ENCODE measurements at regions of chr2 and their contacts with region 1.

Region 1: GRCh38 chr2:215347878-215348277 is 36.0 kb downstream of the ATIC start:
- DNase-seq: no peak
- H3K4me3 ChIP-seq: no peak overlapping the region
- H3K4me3 Mint-ChIP-seq: no peak overlapping the region
- H3K27ac Mint-ChIP-seq: no peak overlapping the region
- H3K4me1 ChIP-seq: no peaks in the 10 kb centered on the region
- H3K4me1 Mint-ChIP-seq: no peaks in the 10 kb centered on the region
- H3K27me3 ChIP-seq: no peaks in the 10 kb centered on the region
- H3K27me3 Mint-ChIP-seq: no peaks in the 10 kb centered on the region
- CTCF ChIP-seq: no peak

Region 2: DNA sequence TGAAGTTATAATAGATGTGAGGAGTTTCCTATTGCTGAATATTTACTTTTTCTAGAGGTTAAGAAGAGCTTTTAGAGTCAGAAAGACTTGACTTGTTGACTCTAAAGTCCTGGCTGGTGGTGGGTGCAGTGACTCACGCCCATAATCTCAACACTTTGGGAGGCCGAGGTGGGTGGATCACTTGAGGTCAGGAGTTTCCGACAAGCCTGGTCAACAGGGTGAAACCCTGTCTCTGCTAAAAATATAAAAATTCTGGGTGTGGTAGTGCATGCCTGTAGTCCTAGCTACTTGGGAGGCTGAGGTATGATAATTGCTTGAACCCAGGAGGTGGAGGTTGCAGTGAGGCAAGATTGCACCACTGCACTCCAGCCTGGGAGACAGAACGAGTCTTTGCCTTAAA is 69.9 kb before region 1 on chr2:
- CTCF ChIA-PET with region 1: no interaction called
- POLR2A ChIA-PET with region 1: no interaction called
- intact Hi-C with region 1: loop called (anchors 2 kb)
- DNase-seq: no peak
- H3K4me3 ChIP-seq: no peak overlapping the region
- H3K4me3 Mint-ChIP-seq: no peak overlapping the region
- H3K27ac Mint-ChIP-seq: no peak overlapping the region
- H3K4me1 ChIP-seq: no peaks in the 10 kb centered on the region
- H3K4me1 Mint-ChIP-seq: peaks cover 5% of the 10 kb centered on the region
- H3K27me3 ChIP-seq: no peaks in the 10 kb centered on the region
- H3K27me3 Mint-ChIP-seq: no peaks in the 10 kb centered on the region
- CTCF ChIP-seq: no peak

Region 3: GRCh38 chr2:215324811-215325210 is 23.1 kb before region 1 on chr2:
- CTCF ChIA-PET with region 1: no interaction called
- POLR2A ChIA-PET with region 1: no interaction called
- intact Hi-C with region 1: no loop called
- DNase-seq: no peak
- H3K4me3 ChIP-seq: no peak overlapping the region
- H3K4me3 Mint-ChIP-seq: no peak overlapping the region
- H3K27ac Mint-ChIP-seq: peak overlapping the region; percentile 23
- H3K4me1 ChIP-seq: 0 out of 2 replicates have a peak, but pooled peaks cover 4% of the 10 kb centered on the region
- H3K4me1 Mint-ChIP-seq: peaks cover 6% of the 10 kb centered on the region
- H3K27me3 ChIP-seq: no peaks in the 10 kb centered on the region
- H3K27me3 Mint-ChIP-seq: no peaks in the 10 kb centered on the region
- CTCF ChIP-seq: no peak

Measured in Caco-2 (cell line).